Posterior vena cava (tissue), 2 donors: ENCODE measurements at regions of chr1 and their contacts with region 1.

Region 1: GRCh38 chr1:44594871-44595746 is 79.2 kb downstream of the TMEM53 start:
- DNase-seq: peak; percentile 94

Region 2: DNA sequence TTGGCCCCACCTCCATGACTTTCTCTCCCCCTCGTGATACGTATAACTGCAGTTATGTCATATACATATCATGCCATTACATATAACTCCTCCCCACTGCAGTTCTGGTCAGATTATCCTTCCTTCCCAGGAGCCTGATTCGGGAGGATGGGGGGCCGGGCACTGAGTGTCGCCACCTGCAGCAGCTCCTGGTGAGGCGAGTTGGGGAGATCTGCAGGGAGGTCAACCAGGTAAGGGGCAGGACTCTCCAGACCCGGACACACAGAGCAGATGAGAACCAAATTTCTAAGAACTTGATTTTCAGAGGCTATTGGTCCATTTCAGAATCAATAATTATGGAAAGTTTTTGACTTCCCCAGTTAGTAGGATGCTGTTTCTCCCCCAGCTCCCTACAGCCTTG is 1160.9 kb before region 1 on chr1:
- intact Hi-C with region 1: loop called in 1 of 2 experiments (anchors 5 kb)
- DNase-seq: peak; percentile 64

Region 3: DNA sequence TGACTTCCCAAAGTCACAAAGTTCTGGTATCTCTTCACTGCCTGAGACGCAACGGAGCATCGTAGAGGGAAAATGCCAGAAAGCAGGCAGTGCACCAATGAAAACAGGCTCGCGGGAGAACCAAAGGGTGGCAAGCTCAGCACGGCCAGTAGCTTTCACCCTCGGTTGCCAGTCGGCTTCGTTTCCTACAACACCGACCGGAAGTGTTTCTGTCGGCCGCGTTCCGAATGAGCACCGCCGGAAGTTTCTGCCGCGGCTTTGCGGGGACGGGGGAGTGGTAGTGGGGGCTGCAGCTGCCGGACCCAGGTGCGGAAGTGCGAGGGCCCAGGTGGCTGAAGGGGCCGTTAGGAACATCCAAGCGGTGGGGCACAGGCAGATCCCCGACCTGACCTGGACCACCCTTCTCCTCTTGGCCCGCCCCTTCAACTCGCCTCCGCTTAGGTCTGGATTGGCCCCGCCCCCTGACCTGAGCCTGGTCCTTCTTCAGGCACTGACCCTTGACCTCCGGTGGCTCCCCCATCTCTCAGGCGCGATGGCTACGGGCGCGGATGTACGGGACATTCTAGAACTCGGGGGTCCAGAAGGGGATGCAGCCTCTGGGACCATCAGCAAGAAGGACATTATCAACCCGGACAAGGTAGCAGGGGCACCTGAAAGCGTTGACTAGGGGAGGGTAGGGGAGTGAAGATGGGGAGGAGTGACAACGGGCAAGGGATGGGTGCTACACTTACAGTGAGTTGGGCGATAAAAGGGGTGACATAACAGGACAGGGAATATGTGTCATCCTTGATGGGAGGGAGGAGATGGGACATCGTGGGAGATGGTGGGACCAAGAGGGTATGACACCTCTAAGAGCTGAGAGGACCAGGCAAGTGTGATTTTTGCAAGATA is 381.6 kb before region 1 on chr1 and contains the start of gene DMAP1:
- intact Hi-C with region 1: loop called in 1 of 2 experiments (anchors 10 kb)
- DNase-seq: peak; percentile 95
- total RNA-seq, gene DMAP1: 18.5 to 23.6 TPM

Region 4: GRCh38 chr1:44377925-44378784 is 217.0 kb before region 1 on chr1:
- intact Hi-C with region 1: loop called (anchors 5 to 10 kb)
- DNase-seq: no peak

Region 5: DNA sequence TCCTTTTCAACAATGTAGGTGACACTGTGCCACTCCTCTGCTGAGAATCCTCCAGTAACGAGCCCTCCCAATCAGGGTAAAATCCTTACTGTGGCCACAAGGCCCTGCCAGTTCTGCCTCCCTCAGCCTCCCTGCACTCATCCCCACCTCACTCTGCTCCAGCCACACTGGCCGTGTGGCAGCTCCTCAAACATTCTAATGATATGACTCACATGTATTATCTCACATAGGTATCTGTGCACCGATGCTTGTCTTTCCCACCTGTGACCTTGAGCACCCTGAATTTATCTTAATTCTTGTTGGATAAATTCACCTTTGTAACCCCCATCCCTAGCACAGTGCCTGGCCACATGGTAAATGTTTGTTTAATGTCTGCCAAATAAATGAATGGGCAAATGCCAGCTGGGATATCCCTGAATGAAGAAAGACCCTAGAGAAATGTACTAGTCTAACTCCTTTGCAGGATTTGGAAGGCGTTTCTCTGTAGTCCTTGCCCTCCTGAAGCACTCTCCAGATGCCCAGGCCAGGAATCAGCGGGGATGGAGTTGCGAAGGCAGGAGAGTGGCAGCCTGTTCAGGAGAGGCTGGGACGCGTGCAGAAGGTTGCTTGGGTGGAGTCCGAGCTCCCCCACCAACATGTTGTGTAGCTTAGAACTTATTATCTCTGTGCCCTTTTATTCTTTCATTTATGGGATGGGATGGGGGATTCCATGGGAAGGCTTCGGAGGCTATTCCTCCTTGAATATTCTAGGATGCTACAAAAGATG is 26.8 kb before region 1 on chr1:
- intact Hi-C with region 1: no loop called
- DNase-seq: no peak

Region 6: DNA sequence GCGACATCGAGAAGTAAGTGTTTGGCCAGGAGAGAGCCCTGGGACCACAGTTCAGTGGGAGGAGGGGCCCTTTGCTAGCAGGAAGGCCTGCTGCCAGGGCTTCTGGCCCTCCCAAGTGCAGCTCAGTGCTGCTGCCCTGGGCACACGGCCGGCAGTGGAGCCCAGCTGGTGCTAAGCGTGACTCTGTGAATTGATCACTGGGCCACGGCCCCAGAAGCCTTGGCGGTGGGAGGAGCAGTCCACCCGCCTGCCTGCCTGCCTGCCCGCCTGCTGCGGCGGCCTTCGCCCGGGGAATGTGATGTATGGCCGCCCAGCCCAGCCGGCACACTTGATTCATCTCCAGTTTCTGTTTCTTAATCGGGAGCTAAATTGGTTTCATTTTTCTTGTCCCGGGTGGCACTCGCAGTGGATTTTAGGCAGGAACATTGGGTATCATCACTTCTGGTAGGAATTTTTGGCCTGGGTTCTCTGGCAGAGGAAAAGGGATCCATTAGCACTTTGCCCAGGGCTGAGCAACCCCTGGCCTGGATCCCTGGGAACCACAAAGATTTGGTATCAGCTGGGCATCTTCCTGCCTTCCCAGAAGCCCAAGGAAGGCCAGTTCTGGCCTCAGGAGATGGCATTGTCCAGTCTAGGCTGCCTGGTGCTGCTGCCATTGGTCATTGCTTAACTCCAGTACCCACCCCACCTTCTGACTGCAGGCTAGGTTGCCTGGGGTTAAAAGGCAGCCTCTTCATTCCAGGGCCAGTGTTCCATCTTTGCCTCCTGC is 50.6 kb after region 1 on chr1:
- intact Hi-C with region 1: loop called in 1 of 2 experiments (anchors 1 kb)
- DNase-seq: peak; percentile 87